GM12878 (cell line): ENCODE measurements at regions of chr6 and their contacts with region 1.

Region 1: GRCh38 chr6:158958504-158959386 is 41.3 kb downstream of the RSPH3 start:
- DNase-seq: no peak
- ATAC-seq: peak; percentile 86
- H3K4me3 ChIP-seq: no peak overlapping the region
- H3K27ac ChIP-seq: no peak overlapping the region
- H3K4me1 ChIP-seq: no peaks in the 10 kb centered on the region
- H3K27me3 ChIP-seq: no peaks in the 10 kb centered on the region
- CTCF ChIP-seq: peak; percentile 28 to 46 (median 36); a peak in 4 of 6 replicates
- EP300 ChIP-seq: no peak
- POLR2A ChIP-seq: no peak
- RAD21 ChIP-seq: peak; percentile 54

Region 2: GRCh38 chr6:158910484-158911348 is 48.0 kb before region 1 on chr6:
- CTCF ChIA-PET with region 1: no interaction called
- POLR2A ChIA-PET with region 1: no interaction called
- RAD21 ChIA-PET with region 1: interaction called, 10 read pairs
- SMC1A ChIA-PET with region 1: interaction called, 7 read pairs
- in situ Hi-C with region 1: no loop called
- intact Hi-C with region 1: no loop called
- DNase-seq: peak; percentile 54
- ATAC-seq: peak; percentile 90
- H3K4me3 ChIP-seq: peak overlapping the region; percentile 56
- H3K27ac ChIP-seq: peak overlapping the region; percentile 99
- H3K4me1 ChIP-seq: peaks cover 33% of the 10 kb centered on the region
- H3K27me3 ChIP-seq: no peaks in the 10 kb centered on the region
- CTCF ChIP-seq: no peak
- EP300 ChIP-seq: peak; percentile 36 to 78; a peak in 3 of 4 replicates
- POLR2A ChIP-seq: peak; percentile 51; the same call in 1 of the 2 replicates
- RAD21 ChIP-seq: peak; percentile 35; the same call in 1 of the 2 replicates

Region 3: GRCh38 chr6:159017757-159018559 is 59.2 kb after region 1 on chr6:
- CTCF ChIA-PET with region 1: no interaction called
- POLR2A ChIA-PET with region 1: no interaction called
- RAD21 ChIA-PET with region 1: no interaction called
- SMC1A ChIA-PET with region 1: no interaction called
- in situ Hi-C with region 1: no loop called
- intact Hi-C with region 1: no loop called
- DNase-seq: no peak
- ATAC-seq: peak; percentile 87
- H3K4me3 ChIP-seq: no peak overlapping the region
- H3K27ac ChIP-seq: no peak overlapping the region
- H3K4me1 ChIP-seq: peaks cover 8% of the 10 kb centered on the region
- H3K27me3 ChIP-seq: no peaks in the 10 kb centered on the region
- CTCF ChIP-seq: no peak
- EP300 ChIP-seq: no peak
- POLR2A ChIP-seq: no peak
- RAD21 ChIP-seq: no peak

Region 4: DNA sequence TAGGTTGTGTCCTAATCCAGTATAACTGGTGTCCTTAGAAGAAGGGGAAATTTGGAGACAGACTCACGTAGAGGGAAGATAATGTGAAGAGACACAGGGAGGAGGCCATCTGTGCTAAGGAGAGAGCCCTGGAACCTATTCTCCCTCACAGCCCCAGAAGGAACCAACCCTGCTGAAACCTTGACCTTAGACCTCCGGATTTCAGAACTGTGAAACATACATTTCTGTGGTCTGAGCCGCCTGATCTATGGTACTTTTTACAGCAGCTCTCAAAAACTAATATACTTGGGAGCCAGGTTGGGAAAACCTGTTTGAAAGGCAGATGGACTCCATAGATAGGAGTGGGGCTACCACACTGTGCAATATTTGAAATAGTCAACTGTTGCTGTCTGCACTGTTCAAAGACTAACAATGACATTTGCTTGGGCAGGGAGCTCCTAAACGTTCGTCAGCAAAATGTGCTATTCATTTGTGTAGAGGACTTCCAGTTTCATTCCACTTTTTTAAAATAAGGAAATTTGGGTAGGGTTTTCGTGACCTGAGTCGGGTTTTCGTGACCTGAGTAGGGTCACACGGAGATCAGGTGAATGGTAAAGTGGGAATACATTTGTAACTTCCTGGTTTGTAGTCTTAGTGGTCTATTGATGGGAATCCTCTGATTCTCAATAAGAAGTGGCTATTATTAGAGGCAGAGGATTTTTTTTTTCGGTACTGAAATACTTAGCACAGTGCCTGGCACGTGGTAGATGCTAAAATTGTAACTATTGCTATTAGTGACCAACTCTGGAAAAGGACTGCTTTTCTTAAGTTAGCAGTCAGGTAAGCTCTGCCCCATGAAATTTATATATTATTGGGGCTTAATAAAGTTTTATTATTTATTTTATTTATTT is 74.7 kb after region 1 on chr6:
- CTCF ChIA-PET with region 1: no interaction called
- POLR2A ChIA-PET with region 1: no interaction called
- RAD21 ChIA-PET with region 1: no interaction called
- SMC1A ChIA-PET with region 1: no interaction called
- in situ Hi-C with region 1: no loop called
- intact Hi-C with region 1: no loop called
- DNase-seq: no peak
- ATAC-seq: peak; percentile 50
- H3K4me3 ChIP-seq: no peak overlapping the region
- H3K27ac ChIP-seq: no peak overlapping the region
- H3K4me1 ChIP-seq: peaks cover 8% of the 10 kb centered on the region
- H3K27me3 ChIP-seq: no peaks in the 10 kb centered on the region
- CTCF ChIP-seq: no peak
- EP300 ChIP-seq: no peak
- POLR2A ChIP-seq: no peak
- RAD21 ChIP-seq: no peak

Region 5: GRCh38 chr6:159298840-159299239 is 340.1 kb after region 1 on chr6:
- CTCF ChIA-PET with region 1: no interaction called
- POLR2A ChIA-PET with region 1: no interaction called
- RAD21 ChIA-PET with region 1: no interaction called
- SMC1A ChIA-PET with region 1: no interaction called
- in situ Hi-C with region 1: no loop called
- intact Hi-C with region 1: no loop called
- DNase-seq: no peak
- ATAC-seq: peak; percentile 34; the same call in 1 of the 3 replicates
- H3K4me3 ChIP-seq: no peak overlapping the region
- H3K27ac ChIP-seq: no peak overlapping the region
- H3K4me1 ChIP-seq: no peaks in the 10 kb centered on the region
- H3K27me3 ChIP-seq: peaks cover 0 to 3% of the 10 kb centered on the region in 2 experiments; a peak in 2 of 4 replicates
- CTCF ChIP-seq: no peak
- EP300 ChIP-seq: no peak
- POLR2A ChIP-seq: no peak
- RAD21 ChIP-seq: no peak